IMR-90 (cell line): ENCODE measurements at regions of chr12 and their contacts with region 1.

Region 1: GRCh38 chr12:15910864-15911721 is at the start of gene DERA:
- DNase-seq: peak; percentile 68
- ATAC-seq: peak; percentile 99
- H3K4me3 ChIP-seq: peak within 1 kb of the TSS; percentile 92
- H3K27ac ChIP-seq: peak within 1 kb of the TSS; percentile 89
- H3K4me1 ChIP-seq: peaks cover 2% of the 10 kb centered on the region; the same call in 1 of the 2 replicates
- H3K27me3 ChIP-seq: no peaks in the 10 kb centered on the region
- CTCF ChIP-seq: no peak
- POLR2A ChIP-seq: peak; percentile 67
- RAD21 ChIP-seq: no peak
- total RNA-seq, gene DERA: 58.6 and 59.7 TPM in 2 replicates

Region 2: GRCh38 chr12:15863984-15864383 is 47.1 kb before region 1 on chr12:
- CTCF ChIA-PET with region 1: no interaction called
- POLR2A ChIA-PET with region 1: no interaction called
- dilution Hi-C with region 1: no loop called
- in situ Hi-C with region 1: no loop called
- intact Hi-C with region 1: no loop called
- DNase-seq: no peak
- ATAC-seq: no peak
- H3K4me3 ChIP-seq: no peak overlapping the region
- H3K27ac ChIP-seq: no peak overlapping the region
- H3K4me1 ChIP-seq: peaks cover 4% of the 10 kb centered on the region
- H3K27me3 ChIP-seq: no peaks in the 10 kb centered on the region
- CTCF ChIP-seq: no peak
- POLR2A ChIP-seq: no peak
- RAD21 ChIP-seq: no peak

Region 3: GRCh38 chr12:15979096-15980092 is 68.3 kb after region 1 on chr12:
- CTCF ChIA-PET with region 1: no interaction called
- POLR2A ChIA-PET with region 1: no interaction called
- dilution Hi-C with region 1: no loop called
- in situ Hi-C with region 1: no loop called
- intact Hi-C with region 1: loop called (anchors 2 kb)
- DNase-seq: peak; percentile 93
- ATAC-seq: peak; percentile 74
- H3K4me3 ChIP-seq: no peak overlapping the region
- H3K27ac ChIP-seq: peak overlapping the region; percentile 81
- H3K4me1 ChIP-seq: peaks cover 22% of the 10 kb centered on the region
- H3K27me3 ChIP-seq: no peaks in the 10 kb centered on the region
- CTCF ChIP-seq: peak; percentile 37
- POLR2A ChIP-seq: no peak
- RAD21 ChIP-seq: no peak

Region 4: GRCh38 chr12:16165506-16165905 is 254.4 kb after region 1 on chr12:
- CTCF ChIA-PET with region 1: no interaction called
- POLR2A ChIA-PET with region 1: no interaction called
- dilution Hi-C with region 1: no loop called
- in situ Hi-C with region 1: no loop called
- intact Hi-C with region 1: no loop called
- DNase-seq: peak; percentile 47
- ATAC-seq: peak; percentile 80
- H3K4me3 ChIP-seq: no peak overlapping the region
- H3K27ac ChIP-seq: no peak overlapping the region
- H3K4me1 ChIP-seq: no peaks in the 10 kb centered on the region
- H3K27me3 ChIP-seq: no peaks in the 10 kb centered on the region; the same call in 1 of the 2 replicates
- CTCF ChIP-seq: peak; percentile 68
- POLR2A ChIP-seq: no peak
- RAD21 ChIP-seq: peak; percentile 78

Region 5: DNA sequence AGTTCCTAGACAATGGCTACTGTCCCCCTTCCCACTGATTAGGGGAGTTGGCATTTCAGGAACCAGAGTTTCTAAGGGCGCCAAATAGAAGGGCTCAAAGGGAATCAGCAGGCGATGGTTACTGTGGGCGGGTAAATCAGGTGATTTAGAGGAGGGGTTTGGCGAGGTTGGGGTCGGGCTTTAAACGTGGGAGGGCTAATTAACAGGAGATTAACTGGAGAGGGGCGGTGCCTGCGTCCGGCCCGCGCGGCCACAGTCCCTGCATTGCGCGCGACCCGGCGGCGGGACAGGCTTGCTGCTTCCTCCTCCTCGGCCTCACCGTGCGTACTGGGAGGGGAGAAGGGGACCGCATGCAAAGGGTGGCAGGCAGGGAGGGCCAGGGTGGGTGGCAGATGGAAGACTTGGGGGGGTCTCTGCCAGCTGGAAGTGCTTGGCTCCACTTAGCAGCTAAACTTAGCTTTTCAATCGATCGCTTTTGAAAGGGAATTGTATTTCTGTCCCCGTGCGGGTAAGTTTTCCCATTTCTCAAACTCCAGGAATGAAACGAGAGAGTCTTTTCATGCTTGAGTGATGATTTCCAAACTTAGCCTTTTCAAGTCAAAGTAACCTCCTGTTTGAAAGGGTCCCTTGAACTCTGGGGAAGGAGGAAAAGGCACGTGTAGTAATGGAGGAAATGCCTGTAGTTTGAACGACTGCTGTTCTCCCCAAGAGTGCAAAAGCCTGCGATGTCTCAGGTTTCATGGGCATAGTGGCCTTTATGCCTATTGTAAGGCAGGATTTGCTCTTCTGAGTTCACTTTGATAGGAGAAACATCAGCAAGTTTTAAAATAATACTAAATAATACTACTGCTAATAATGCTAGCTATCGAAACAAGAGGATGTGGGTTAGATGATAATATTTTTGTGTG is 436.6 kb after region 1 on chr12 and contains the start of gene MGST1:
- CTCF ChIA-PET with region 1: no interaction called
- POLR2A ChIA-PET with region 1: no interaction called
- dilution Hi-C with region 1: no loop called
- in situ Hi-C with region 1: no loop called
- intact Hi-C with region 1: loop called (anchors 10 kb)
- DNase-seq: peak; percentile 59
- ATAC-seq: peak; percentile 73
- H3K4me3 ChIP-seq: peak within 1 kb of the TSS; percentile 93
- H3K27ac ChIP-seq: peak within 1 kb of the TSS; percentile 98
- H3K4me1 ChIP-seq: peaks cover 6% of the 10 kb centered on the region
- H3K27me3 ChIP-seq: no peaks in the 10 kb centered on the region
- CTCF ChIP-seq: no peak
- POLR2A ChIP-seq: peak; percentile 72
- RAD21 ChIP-seq: no peak
- total RNA-seq, gene MGST1: 87.2 and 105 TPM in 2 replicates